ENCODE measurements at regions of chr10 and their contacts with region 1.

Region 1: DNA sequence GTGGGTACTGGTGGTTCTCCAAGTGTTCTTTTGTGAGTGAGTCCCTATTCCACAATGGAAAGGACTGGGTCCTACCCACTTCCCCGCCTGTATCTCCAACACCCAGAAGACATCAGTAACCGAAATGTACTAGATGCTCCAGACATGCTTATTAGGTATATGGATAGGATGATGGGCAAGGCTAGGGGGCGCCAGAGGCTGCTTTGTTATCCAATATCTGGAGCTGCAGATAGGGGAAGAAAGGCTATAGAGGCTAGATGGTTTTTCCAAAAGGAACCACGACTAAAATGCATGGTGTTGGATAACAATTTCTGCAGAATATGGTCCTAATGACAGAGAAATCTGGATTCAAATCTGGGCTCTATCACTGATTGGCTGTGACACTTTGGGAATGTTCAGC is 56.2 kb upstream of the TM9SF3 start:
- DNase-seq: peak; percentile 81
- ATAC-seq: no peak
- H3K4me3 ChIP-seq: no peak overlapping the region
- H3K4me3 Mint-ChIP-seq: no peak overlapping the region
- H3K27ac ChIP-seq: peak overlapping the region in 1 of 2 donors; percentile 76
- H3K27ac Mint-ChIP-seq: peak overlapping the region; percentile 74
- H3K4me1 ChIP-seq: peaks cover 39 to 57% of the 10 kb centered on the region in 2 donors
- H3K4me1 Mint-ChIP-seq: peaks cover 49% of the 10 kb centered on the region
- H3K27me3 ChIP-seq: no peaks in the 10 kb centered on the region
- H3K27me3 Mint-ChIP-seq: no peaks in the 10 kb centered on the region
- CTCF ChIP-seq: peak; percentile 73

Region 2: GRCh38 chr10:95864906-95865813 is 777.8 kb before region 1 on chr10:
- CTCF ChIA-PET with region 1: no interaction called
- POLR2A ChIA-PET with region 1: no interaction called
- intact Hi-C with region 1: no loop called
- DNase-seq: peak; percentile 83
- ATAC-seq: peak; percentile 99
- H3K4me3 ChIP-seq: no peak overlapping the region
- H3K4me3 Mint-ChIP-seq: no peak overlapping the region
- H3K27ac ChIP-seq: peak overlapping the region; percentile 26 to 75
- H3K27ac Mint-ChIP-seq: peak overlapping the region; percentile 88
- H3K4me1 ChIP-seq: peaks cover 11 to 13% of the 10 kb centered on the region in 2 donors
- H3K4me1 Mint-ChIP-seq: peaks cover 23% of the 10 kb centered on the region
- H3K27me3 ChIP-seq: no peaks in the 10 kb centered on the region
- H3K27me3 Mint-ChIP-seq: no peaks in the 10 kb centered on the region
- CTCF ChIP-seq: peak; percentile 88

Region 3: GRCh38 chr10:96366502-96366901 is 276.5 kb before region 1 on chr10:
- CTCF ChIA-PET with region 1: no interaction called
- POLR2A ChIA-PET with region 1: no interaction called
- intact Hi-C with region 1: no loop called
- DNase-seq: no peak
- ATAC-seq: no peak
- H3K4me3 ChIP-seq: no peak overlapping the region
- H3K4me3 Mint-ChIP-seq: no peak overlapping the region
- H3K27ac ChIP-seq: no peak overlapping the region
- H3K27ac Mint-ChIP-seq: no peak overlapping the region
- H3K4me1 ChIP-seq: peaks cover 0 to 3% of the 10 kb centered on the region in 2 donors
- H3K4me1 Mint-ChIP-seq: peaks cover 2% of the 10 kb centered on the region
- H3K27me3 ChIP-seq: peaks cover 0 to 2% (median 0%) of the 10 kb centered on the region in 4 experiments
- H3K27me3 Mint-ChIP-seq: no peaks in the 10 kb centered on the region
- CTCF ChIP-seq: no peak

Region 4: DNA sequence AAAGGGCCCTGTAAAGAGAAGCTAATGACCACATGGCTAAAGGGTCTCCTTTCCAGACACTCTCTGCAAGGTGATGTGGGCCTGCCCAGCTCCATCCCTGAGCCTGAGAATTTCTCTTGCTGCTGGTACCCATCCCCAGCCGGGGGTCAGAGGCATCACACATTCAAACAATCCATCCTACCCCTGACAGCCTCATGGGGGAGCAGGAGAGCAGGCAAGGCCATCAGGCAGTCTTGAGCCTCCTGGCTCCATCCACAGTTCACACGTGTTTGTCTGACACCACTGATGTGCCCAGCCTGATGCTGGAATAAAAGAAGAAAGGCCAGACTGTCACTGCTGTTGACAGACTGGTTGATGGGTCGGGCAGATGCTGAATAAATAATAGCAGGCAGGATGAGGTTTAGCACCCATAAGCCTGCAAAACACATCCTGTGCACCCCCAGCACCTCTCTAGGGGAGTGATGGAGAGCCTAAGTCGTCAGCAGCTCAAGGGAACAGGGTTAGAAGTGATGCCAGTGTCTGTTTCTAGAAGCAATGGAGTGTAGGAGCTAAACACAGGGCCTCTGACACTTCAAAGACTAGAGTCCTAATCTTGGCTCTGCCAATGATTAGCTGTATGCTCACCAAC is 172.7 kb before region 1 on chr10:
- CTCF ChIA-PET with region 1: no interaction called
- POLR2A ChIA-PET with region 1: no interaction called
- intact Hi-C with region 1: no loop called
- DNase-seq: peak; percentile 25
- ATAC-seq: no peak
- H3K4me3 ChIP-seq: no peak overlapping the region
- H3K4me3 Mint-ChIP-seq: no peak overlapping the region
- H3K27ac ChIP-seq: no peak overlapping the region
- H3K27ac Mint-ChIP-seq: no peak overlapping the region
- H3K4me1 ChIP-seq: no peaks in the 10 kb centered on the region
- H3K4me1 Mint-ChIP-seq: no peaks in the 10 kb centered on the region
- H3K27me3 ChIP-seq: peaks cover 0 to 3% (median 0%) of the 10 kb centered on the region in 4 experiments
- H3K27me3 Mint-ChIP-seq: peaks cover 35% of the 10 kb centered on the region
- CTCF ChIP-seq: peak; percentile 46

Region 5: DNA sequence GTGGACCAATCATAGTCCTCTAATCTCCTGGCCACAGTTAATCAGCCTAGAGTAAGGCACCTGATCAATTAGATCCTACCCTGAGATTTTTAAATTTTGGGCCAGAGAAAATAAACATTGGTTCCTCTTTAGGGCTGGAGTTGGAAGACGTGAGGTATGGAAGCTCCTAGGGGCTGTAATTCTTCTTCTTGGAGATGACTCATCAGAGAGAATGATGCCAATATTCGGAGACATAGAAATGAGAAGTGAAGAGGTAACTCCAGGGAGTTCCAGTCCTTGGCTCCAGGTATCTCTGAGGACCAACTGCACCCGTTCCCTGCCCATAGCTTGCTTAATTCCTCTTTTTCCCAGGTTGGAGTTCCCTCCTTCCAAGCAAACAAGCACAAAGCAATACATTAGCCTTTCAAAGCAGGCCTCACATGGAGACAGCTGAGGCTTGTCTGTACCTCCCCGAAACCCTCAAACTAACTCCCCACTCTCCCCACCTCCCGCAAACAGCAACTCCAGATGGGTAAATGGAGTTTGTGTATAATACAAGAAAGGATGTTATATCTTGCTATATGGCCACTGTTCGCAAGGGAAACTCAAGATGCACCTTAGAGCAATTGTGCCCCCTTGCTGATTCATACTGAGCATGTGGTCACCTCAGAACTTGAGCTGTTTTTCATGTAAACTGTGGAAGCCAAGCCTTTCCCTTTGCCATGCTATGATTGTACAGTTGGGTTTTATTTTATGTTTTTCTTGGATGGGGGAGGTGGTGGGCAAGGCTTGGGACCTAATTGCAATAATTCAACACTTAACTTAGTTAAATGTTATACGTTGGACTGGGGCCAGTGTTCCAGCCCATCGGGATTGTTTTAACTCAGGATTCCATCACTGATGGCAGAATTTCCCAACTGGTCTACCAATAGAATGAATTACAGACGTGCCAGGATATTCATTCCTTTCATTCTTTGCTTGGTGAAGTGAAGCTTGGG is 48.1 kb after region 1 on chr10:
- CTCF ChIA-PET with region 1: interaction called, 12 read pairs
- POLR2A ChIA-PET with region 1: interaction called, 4 read pairs
- intact Hi-C with region 1: no loop called
- DNase-seq: no peak
- ATAC-seq: no peak
- H3K4me3 ChIP-seq: no peak overlapping the region
- H3K4me3 Mint-ChIP-seq: peak overlapping the region; percentile 54
- H3K27ac ChIP-seq: peak overlapping the region in 1 of 2 donors; percentile 63
- H3K27ac Mint-ChIP-seq: peak overlapping the region; percentile 88
- H3K4me1 ChIP-seq: peaks cover 86 to 89% of the 10 kb centered on the region in 2 donors
- H3K4me1 Mint-ChIP-seq: peaks cover 90% of the 10 kb centered on the region
- H3K27me3 ChIP-seq: no peaks in the 10 kb centered on the region
- H3K27me3 Mint-ChIP-seq: no peaks in the 10 kb centered on the region
- CTCF ChIP-seq: no peak

Region 6: GRCh38 chr10:96719850-96720421 is 77.0 kb after region 1 on chr10:
- CTCF ChIA-PET with region 1: interaction called, 77 read pairs
- POLR2A ChIA-PET with region 1: interaction called, 6 read pairs
- intact Hi-C with region 1: loop called (anchors 1 kb)
- DNase-seq: peak; percentile 88
- ATAC-seq: peak; percentile 63
- H3K4me3 ChIP-seq: peak overlapping the region; percentile 86 to 98 (median 91)
- H3K4me3 Mint-ChIP-seq: peak overlapping the region; percentile 100
- H3K27ac ChIP-seq: peak overlapping the region; percentile 86 to 93
- H3K27ac Mint-ChIP-seq: peak overlapping the region; percentile 99
- H3K4me1 ChIP-seq: peaks cover 49 to 70% of the 10 kb centered on the region in 2 donors
- H3K4me1 Mint-ChIP-seq: peaks cover 70% of the 10 kb centered on the region
- H3K27me3 ChIP-seq: no peaks in the 10 kb centered on the region
- H3K27me3 Mint-ChIP-seq: no peaks in the 10 kb centered on the region
- CTCF ChIP-seq: peak; percentile 77

Region 7: DNA sequence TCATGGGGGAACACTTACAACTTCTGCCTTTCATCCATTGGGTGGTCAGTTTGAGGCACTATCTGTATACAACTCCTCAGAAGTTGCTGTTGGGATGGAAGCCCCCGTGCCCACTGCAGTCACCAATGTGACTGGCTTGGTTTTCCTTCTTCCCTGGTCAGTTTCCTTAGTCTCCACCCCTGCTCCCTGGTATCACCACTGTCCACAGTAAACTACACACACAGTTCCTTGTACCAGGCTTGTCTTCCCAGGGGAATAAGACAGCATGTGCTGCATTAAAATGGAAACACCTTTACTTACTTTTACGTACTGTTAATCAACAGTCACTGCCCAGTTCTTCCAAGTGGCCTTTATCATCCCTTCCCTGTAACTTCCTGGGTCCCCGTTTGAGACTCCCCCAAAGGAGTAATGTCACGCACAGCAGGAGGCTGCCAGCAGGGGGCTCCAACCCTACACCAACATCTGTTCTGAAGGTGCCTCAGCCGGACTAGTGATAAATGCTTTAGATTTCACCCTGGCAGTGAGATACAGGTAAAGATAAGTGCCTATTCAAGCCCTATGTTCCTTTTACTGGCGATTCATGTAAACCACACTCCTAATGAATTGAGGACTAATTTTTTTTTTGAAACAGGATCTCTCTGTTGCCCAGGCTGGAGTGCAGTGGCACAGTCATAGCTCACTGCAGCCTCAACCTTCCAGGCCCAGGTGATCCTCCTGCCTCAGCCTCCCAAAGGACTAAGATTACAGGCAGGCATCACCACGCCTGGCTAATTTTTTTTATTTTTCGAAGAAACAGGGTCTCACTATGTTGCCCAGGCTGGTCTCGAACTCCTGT is 122.7 kb after region 1 on chr10:
- CTCF ChIA-PET with region 1: interaction called, 67 read pairs
- POLR2A ChIA-PET with region 1: interaction called, 9 read pairs
- intact Hi-C with region 1: no loop called
- DNase-seq: peak; percentile 83
- ATAC-seq: peak; percentile 74
- H3K4me3 ChIP-seq: no peak overlapping the region
- H3K4me3 Mint-ChIP-seq: peak overlapping the region; percentile 60
- H3K27ac ChIP-seq: peak overlapping the region; percentile 30 to 54
- H3K27ac Mint-ChIP-seq: peak overlapping the region; percentile 77
- H3K4me1 ChIP-seq: peaks cover 33% of the 10 kb centered on the region in 2 donors
- H3K4me1 Mint-ChIP-seq: peaks cover 39% of the 10 kb centered on the region
- H3K27me3 ChIP-seq: no peaks in the 10 kb centered on the region
- H3K27me3 Mint-ChIP-seq: no peaks in the 10 kb centered on the region
- CTCF ChIP-seq: peak; percentile 90

Region 8: GRCh38 chr10:97025613-97026242 is 382.8 kb after region 1 on chr10:
- CTCF ChIA-PET with region 1: interaction called, 28 read pairs
- POLR2A ChIA-PET with region 1: no interaction called
- intact Hi-C with region 1: loop called (anchors 2 kb)
- DNase-seq: peak; percentile 67
- ATAC-seq: peak; percentile 57
- H3K4me3 ChIP-seq: no peak overlapping the region
- H3K4me3 Mint-ChIP-seq: no peak overlapping the region
- H3K27ac ChIP-seq: no peak overlapping the region
- H3K27ac Mint-ChIP-seq: no peak overlapping the region
- H3K4me1 ChIP-seq: peaks cover 0 to 4% of the 10 kb centered on the region in 2 donors
- H3K4me1 Mint-ChIP-seq: peaks cover 8% of the 10 kb centered on the region
- H3K27me3 ChIP-seq: no peaks in the 10 kb centered on the region
- H3K27me3 Mint-ChIP-seq: peaks cover 5% of the 10 kb centered on the region
- CTCF ChIP-seq: peak; percentile 77